ENCODE measurements at regions of chr11 and their contacts with region 1.

Region 1: GRCh38 chr11:83156150-83156995 is 558 bp upstream of the PCF11 start:
- DNase-seq: peak; percentile 99
- ATAC-seq: peak; percentile 92
- H3K4me3 Mint-ChIP-seq: peak overlapping the region; percentile 100
- H3K27ac Mint-ChIP-seq: peak overlapping the region; percentile 100
- H3K4me1 Mint-ChIP-seq: peaks cover 23% of the 10 kb centered on the region
- H3K27me3 Mint-ChIP-seq: no peaks in the 10 kb centered on the region

Region 2: DNA sequence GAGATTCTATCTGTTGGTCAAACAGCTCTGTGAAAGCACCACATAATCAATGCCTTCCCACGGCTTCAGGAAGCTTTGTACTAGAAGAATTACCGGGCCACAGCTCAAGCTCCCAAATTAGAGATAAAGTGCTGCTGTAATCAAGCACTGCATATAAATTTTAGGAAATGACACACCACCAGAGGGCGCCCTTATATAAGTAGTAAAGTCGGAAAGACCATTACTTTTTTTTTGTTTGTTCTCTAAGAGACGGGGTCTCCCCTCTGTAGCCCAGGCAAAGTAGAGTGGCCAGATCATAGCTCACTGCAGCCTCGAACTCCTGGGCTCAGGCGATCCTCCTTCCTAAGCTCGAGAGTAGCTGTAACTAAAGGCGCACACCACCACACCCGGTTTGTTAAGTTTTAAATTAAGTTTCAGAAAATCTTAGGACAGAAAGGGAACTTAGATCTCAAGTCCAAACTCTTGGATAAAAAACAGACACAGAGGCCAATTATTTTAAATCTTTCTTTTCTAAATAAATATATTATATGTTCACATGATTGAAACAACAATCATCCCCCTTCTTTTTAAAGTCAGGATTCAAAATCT is 288.8 kb before region 1 on chr11:
- CTCF ChIA-PET with region 1: interaction called, 11 read pairs
- POLR2A ChIA-PET with region 1: interaction called, 6 read pairs
- intact Hi-C with region 1: no loop called
- DNase-seq: peak; percentile 87
- ATAC-seq: peak; percentile 63
- H3K4me3 Mint-ChIP-seq: no peak overlapping the region
- H3K27ac Mint-ChIP-seq: no peak overlapping the region
- H3K4me1 Mint-ChIP-seq: peaks cover 14% of the 10 kb centered on the region
- H3K27me3 Mint-ChIP-seq: no peaks in the 10 kb centered on the region

Region 3: DNA sequence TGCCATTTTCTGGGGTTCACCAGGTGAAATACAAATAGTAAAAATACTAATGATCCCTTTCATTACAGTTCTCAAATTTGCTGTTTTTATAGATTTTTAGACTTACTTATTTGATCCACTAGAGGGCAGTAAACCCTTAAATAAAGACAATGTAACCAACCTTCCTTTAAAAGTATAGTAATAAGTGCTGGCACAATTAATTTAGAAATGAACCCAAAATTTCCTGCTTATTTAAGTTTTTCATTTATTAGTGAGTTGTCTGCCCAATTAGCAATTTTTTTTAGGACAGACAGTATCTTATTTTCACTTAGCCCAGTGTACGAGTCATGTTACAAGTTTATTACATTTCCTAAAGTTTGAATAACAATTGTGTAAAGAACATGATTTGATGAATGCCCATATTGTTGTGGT is 250.1 kb before region 1 on chr11:
- CTCF ChIA-PET with region 1: interaction called, 15 read pairs
- POLR2A ChIA-PET with region 1: interaction called, 15 read pairs
- intact Hi-C with region 1: loop called in 1 of 2 experiments (anchors 1 kb)
- DNase-seq: no peak
- ATAC-seq: no peak
- H3K4me3 Mint-ChIP-seq: no peak overlapping the region
- H3K27ac Mint-ChIP-seq: no peak overlapping the region
- H3K4me1 Mint-ChIP-seq: peaks cover 46% of the 10 kb centered on the region
- H3K27me3 Mint-ChIP-seq: no peaks in the 10 kb centered on the region

Region 4: DNA sequence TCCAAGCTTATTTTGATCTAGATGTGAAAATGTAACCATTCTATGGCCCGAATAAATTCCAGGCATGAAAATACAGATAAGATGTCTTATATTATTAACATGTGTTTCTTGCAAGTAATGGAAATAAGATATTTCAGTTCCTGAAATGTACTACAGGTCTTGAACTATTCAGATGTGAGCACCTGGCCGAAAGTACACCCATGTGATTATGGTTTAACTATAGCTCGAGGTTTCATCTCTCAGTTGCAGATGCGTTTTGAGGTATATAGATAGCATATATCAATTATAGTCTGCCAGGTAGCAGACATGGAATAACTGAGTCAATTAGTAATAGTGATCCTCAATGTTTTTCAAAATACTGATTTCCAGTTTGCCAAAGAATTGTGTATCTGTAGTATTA is 186.6 kb before region 1 on chr11:
- CTCF ChIA-PET with region 1: no interaction called
- POLR2A ChIA-PET with region 1: interaction called, 5 read pairs
- intact Hi-C with region 1: loop called in 1 of 2 experiments (anchors 2 kb)
- DNase-seq: no peak
- ATAC-seq: peak; percentile 61
- H3K4me3 Mint-ChIP-seq: no peak overlapping the region
- H3K27ac Mint-ChIP-seq: no peak overlapping the region
- H3K4me1 Mint-ChIP-seq: peaks cover 47% of the 10 kb centered on the region
- H3K27me3 Mint-ChIP-seq: no peaks in the 10 kb centered on the region

Region 5: GRCh38 chr11:83071567-83072349 is 84.6 kb before region 1 on chr11 and contains the start of gene RAB30:
- CTCF ChIA-PET with region 1: interaction called, 6 read pairs
- POLR2A ChIA-PET with region 1: interaction called, 9 read pairs
- intact Hi-C with region 1: loop called (anchors 1 kb)
- DNase-seq: peak; percentile 95
- ATAC-seq: peak; percentile 98
- H3K4me3 Mint-ChIP-seq: no peak within 1 kb of the TSS
- H3K27ac Mint-ChIP-seq: no peak within 1 kb of the TSS
- H3K4me1 Mint-ChIP-seq: peaks cover 33% of the 10 kb centered on the region
- H3K27me3 Mint-ChIP-seq: no peaks in the 10 kb centered on the region
- total RNA-seq, gene RAB30: 11.4 to 13.2 TPM

Region 6: GRCh38 chr11:83172551-83172950 is 16.2 kb after region 1 on chr11:
- CTCF ChIA-PET with region 1: interaction called, 4 read pairs
- POLR2A ChIA-PET with region 1: interaction called, 5 read pairs
- intact Hi-C with region 1: loop called in 1 of 2 experiments (anchors 2 kb)
- DNase-seq: no peak
- ATAC-seq: peak; percentile 20
- H3K4me3 Mint-ChIP-seq: no peak overlapping the region
- H3K27ac Mint-ChIP-seq: no peak overlapping the region
- H3K4me1 Mint-ChIP-seq: peaks cover 79% of the 10 kb centered on the region
- H3K27me3 Mint-ChIP-seq: no peaks in the 10 kb centered on the region

Region 7: DNA sequence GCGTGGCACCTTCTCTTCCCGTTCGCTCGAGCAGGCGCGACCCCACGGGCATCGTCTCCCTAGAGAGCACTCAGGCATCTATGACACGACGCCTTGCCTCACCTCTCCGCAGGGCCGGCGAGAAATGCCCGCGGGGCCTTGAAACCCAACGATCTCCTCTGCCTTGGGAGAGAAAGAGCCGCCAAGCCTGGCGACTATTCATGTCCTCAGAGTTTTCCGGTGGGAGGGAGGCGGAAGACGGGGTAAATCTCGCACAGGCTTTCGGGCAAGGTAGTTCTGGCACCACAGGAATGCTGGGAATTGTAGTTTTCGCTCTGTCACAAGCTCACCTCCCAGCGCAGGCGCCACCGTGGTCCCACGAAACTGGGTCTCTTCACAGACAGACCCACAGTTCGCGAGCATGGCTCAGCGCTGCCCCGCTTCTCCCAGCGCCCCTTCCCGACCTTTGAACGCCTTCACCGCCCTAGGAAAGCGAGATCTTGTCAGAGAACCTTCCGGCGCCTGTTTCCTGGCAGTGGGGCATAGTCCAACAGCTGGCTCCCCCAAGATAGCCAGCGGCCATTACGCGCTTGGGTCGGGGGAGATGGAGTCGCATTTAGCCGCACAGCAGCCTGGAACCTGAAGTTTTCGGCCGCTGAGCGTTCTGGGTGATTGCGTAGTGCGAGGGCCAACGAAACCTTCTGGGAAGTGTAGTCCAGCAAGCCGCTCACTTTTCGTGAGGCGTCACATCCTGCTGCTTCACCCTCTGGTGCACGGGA is 129.6 kb after region 1 on chr11 and contains the start of gene CCDC90B:
- CTCF ChIA-PET with region 1: interaction called, 3 read pairs
- POLR2A ChIA-PET with region 1: no interaction called
- intact Hi-C with region 1: loop called (anchors 1 kb)
- DNase-seq: peak; percentile 96
- ATAC-seq: peak; percentile 94
- H3K4me3 Mint-ChIP-seq: peak within 1 kb of the TSS; percentile 81
- H3K27ac Mint-ChIP-seq: peak within 1 kb of the TSS; percentile 98
- H3K4me1 Mint-ChIP-seq: peaks cover 35% of the 10 kb centered on the region
- H3K27me3 Mint-ChIP-seq: no peaks in the 10 kb centered on the region
- total RNA-seq, gene CCDC90B: 30.4 to 32.8 TPM

Region 8: GRCh38 chr11:83744620-83745192 is 588.3 kb after region 1 on chr11:
- CTCF ChIA-PET with region 1: no interaction called
- POLR2A ChIA-PET with region 1: no interaction called
- intact Hi-C with region 1: no loop called
- DNase-seq: no peak
- ATAC-seq: no peak
- H3K4me3 Mint-ChIP-seq: no peak overlapping the region
- H3K27ac Mint-ChIP-seq: no peak overlapping the region
- H3K4me1 Mint-ChIP-seq: no peaks in the 10 kb centered on the region
- H3K27me3 Mint-ChIP-seq: peaks cover 3% of the 10 kb centered on the region

Region 9: GRCh38 chr11:83918476-83918875 is 762.1 kb after region 1 on chr11:
- CTCF ChIA-PET with region 1: no interaction called
- POLR2A ChIA-PET with region 1: no interaction called
- intact Hi-C with region 1: no loop called
- DNase-seq: no peak
- ATAC-seq: no peak
- H3K4me3 Mint-ChIP-seq: no peak overlapping the region
- H3K27ac Mint-ChIP-seq: no peak overlapping the region
- H3K4me1 Mint-ChIP-seq: no peaks in the 10 kb centered on the region
- H3K27me3 Mint-ChIP-seq: no peaks in the 10 kb centered on the region